HepG2 (cell line): ENCODE measurements at regions of chr2 and their contacts with region 1.

Region 1: GRCh38 chr2:53987336-53987921 is 16.6 kb upstream of the PSME4 start:
- DNase-seq: peak; percentile 51
- ATAC-seq: no peak
- H3K4me3 ChIP-seq: no peak overlapping the region
- H3K27ac ChIP-seq: peak overlapping the region; percentile 1
- H3K4me1 ChIP-seq: peaks cover 46% of the 10 kb centered on the region
- H3K27me3 ChIP-seq: no peaks in the 10 kb centered on the region
- CTCF ChIP-seq: no peak
- EP300 ChIP-seq: peak in 1 of 2 experiments; percentile 26; a peak in 1 of 4 replicates
- POLR2A ChIP-seq: no peak
- RAD21 ChIP-seq: no peak

Region 2: DNA sequence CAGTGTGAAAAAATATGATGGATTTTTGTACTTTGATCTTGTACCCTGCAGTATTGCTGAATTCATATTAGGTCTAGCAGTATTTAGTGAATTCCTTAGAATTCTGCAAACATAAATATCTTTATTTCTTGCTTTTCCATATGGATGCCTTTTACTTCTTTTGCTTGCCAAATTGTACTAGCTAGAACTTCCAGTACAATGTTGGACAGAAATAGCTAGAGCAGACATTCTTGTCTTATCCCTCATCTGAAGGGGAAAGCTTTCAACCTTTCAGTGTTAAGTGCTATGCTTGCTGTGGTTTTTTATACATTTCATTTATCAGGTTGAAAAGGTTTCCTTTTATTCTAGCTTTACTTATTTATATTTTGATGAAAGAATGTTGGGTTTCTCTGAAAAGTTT is 1541.7 kb before region 1 on chr2:
- CTCF ChIA-PET with region 1: no interaction called
- POLR2A ChIA-PET with region 1: no interaction called
- in situ Hi-C with region 1: no loop called
- intact Hi-C with region 1: no loop called
- DNase-seq: no peak
- ATAC-seq: no peak
- H3K4me3 ChIP-seq: no peak overlapping the region
- H3K27ac ChIP-seq: no peak overlapping the region
- H3K4me1 ChIP-seq: no peaks in the 10 kb centered on the region
- H3K27me3 ChIP-seq: no peaks in the 10 kb centered on the region
- CTCF ChIP-seq: no peak
- EP300 ChIP-seq: no peak
- POLR2A ChIP-seq: no peak
- RAD21 ChIP-seq: no peak

Region 3: DNA sequence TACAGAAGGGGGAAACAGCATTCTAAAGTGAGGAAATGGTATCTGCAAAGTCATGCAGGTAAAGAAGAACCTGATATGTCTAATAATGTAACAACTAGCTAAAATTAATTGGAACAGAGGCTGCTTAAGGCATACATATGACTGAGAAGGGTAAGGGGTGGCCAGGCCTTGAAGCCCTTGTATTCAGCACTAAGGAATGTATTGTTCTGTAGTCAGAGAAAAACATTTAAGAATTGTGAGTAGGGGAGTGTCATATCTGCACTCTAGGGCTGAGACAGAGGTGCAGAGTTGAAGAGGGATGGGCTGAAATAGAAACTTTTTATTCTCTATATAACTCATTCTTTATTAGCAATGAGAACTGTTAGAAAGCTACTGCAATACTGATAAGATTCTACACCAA is 365.3 kb before region 1 on chr2:
- CTCF ChIA-PET with region 1: no interaction called
- POLR2A ChIA-PET with region 1: no interaction called
- in situ Hi-C with region 1: no loop called
- intact Hi-C with region 1: no loop called
- DNase-seq: no peak
- ATAC-seq: no peak
- H3K4me3 ChIP-seq: no peak overlapping the region
- H3K27ac ChIP-seq: no peak overlapping the region
- H3K4me1 ChIP-seq: no peaks in the 10 kb centered on the region
- H3K27me3 ChIP-seq: no peaks in the 10 kb centered on the region
- CTCF ChIP-seq: no peak
- EP300 ChIP-seq: no peak
- POLR2A ChIP-seq: no peak
- RAD21 ChIP-seq: no peak

Region 4: DNA sequence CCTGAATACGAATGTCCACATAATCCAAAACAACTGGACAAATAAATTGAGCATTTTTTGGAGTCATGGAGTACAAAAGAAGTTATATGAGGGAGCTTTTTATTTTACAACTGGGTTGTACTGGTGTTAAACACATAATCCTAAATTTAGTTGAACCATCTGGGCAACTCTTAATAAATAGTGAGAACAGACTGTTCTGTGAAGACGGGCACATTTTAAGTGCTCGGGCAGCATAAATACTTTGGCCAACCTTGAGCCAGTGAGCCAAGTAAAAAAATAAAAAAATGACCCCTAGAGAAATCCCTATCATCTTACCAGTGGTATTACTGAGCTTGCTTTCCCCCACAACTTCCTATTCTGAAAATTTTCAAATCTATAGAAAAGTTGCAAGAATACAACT is 34.3 kb after region 1 on chr2:
- CTCF ChIA-PET with region 1: no interaction called
- POLR2A ChIA-PET with region 1: no interaction called
- in situ Hi-C with region 1: no loop called
- intact Hi-C with region 1: loop called (anchors 5 kb)
- DNase-seq: no peak
- ATAC-seq: no peak
- H3K4me3 ChIP-seq: no peak overlapping the region
- H3K27ac ChIP-seq: no peak overlapping the region
- H3K4me1 ChIP-seq: no peaks in the 10 kb centered on the region
- H3K27me3 ChIP-seq: no peaks in the 10 kb centered on the region
- CTCF ChIP-seq: no peak
- EP300 ChIP-seq: no peak
- POLR2A ChIP-seq: no peak
- RAD21 ChIP-seq: no peak

Region 5: GRCh38 chr2:54158311-54158710 is 170.9 kb after region 1 on chr2:
- CTCF ChIA-PET with region 1: no interaction called
- POLR2A ChIA-PET with region 1: no interaction called
- in situ Hi-C with region 1: no loop called
- intact Hi-C with region 1: no loop called
- DNase-seq: no peak
- ATAC-seq: no peak
- H3K4me3 ChIP-seq: no peak overlapping the region
- H3K27ac ChIP-seq: no peak overlapping the region
- H3K4me1 ChIP-seq: peaks cover under 1% of the 10 kb centered on the region; the same call in 1 of the 2 replicates
- H3K27me3 ChIP-seq: no peaks in the 10 kb centered on the region
- CTCF ChIP-seq: no peak
- EP300 ChIP-seq: no peak
- POLR2A ChIP-seq: no peak
- RAD21 ChIP-seq: no peak